Endothelial cell of umbilical vein (primary cell): ENCODE measurements at regions of chr4 and their contacts with region 1.

Region 1: DNA sequence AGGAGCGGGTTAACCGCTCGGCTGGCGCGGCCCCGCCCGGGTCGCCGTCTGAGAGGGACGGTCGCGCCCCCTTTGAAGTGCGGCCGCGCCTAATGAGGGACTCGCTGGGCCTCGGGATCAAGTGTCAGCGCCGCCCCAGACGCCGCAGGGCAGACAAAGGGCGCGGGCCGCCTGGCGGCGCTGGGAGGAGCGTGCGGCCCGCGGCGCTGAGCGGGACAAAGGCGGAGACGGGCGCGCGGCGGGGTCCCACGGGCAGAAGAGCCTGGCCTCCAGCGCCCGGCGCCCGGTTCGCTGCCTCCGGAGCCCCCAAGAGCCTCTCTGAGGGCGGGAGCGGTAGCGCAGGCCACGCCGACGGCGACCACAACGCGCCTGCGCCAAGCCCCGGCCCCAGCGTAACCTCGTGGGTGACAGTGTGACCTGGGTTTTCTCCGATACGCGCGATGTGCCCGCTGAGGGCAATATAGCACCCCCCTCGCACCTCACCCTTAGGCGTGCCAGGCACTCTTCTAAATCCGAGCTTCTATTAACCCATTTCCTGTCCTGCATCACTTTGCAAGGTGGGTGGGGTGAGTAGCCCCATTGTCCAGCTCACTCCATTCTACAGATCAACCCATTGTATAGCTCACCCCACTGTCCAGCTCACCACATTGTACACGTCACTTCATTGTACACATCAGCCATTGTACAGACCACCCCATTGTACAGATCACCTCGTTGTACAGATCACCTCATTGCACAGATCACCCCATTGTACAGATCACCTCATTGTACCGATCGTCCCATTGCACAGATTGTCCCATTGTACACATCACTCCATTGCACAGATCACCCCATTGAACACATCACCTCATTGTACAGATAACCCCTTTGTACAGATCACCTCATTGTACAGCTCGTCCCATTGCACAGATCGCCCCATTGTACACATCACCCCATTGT is 33.7 kb upstream of the STX18 start:
- DNase-seq: peak; percentile 64
- H3K4me3 ChIP-seq: peak overlapping the region; percentile 39 to 63 (median 50)
- H3K27ac ChIP-seq: peak overlapping the region; percentile 62
- H3K4me1 ChIP-seq: peaks cover 5% of the 10 kb centered on the region
- H3K27me3 ChIP-seq: no peaks in the 10 kb centered on the region
- CTCF ChIP-seq: peak in 1 of 2 donors; percentile 51
- POLR2A ChIP-seq: peak; percentile 58

Region 2: GRCh38 chr4:4541661-4542570 is 33.6 kb before region 1 on chr4 and contains the start of gene STX18:
- CTCF ChIA-PET with region 1: interaction called, 13 read pairs
- POLR2A ChIA-PET with region 1: no interaction called
- dilution Hi-C with region 1: no loop called
- intact Hi-C with region 1: loop called (anchors 1 kb)
- DNase-seq: peak; percentile 85
- H3K4me3 ChIP-seq: peak within 1 kb of the TSS; percentile 73 to 92 (median 88)
- H3K27ac ChIP-seq: peak within 1 kb of the TSS; percentile 71
- H3K4me1 ChIP-seq: peaks cover 18% of the 10 kb centered on the region
- H3K27me3 ChIP-seq: no peaks in the 10 kb centered on the region
- CTCF ChIP-seq: no peak
- POLR2A ChIP-seq: peak; percentile 60
- total RNA-seq, gene STX18: 29.9 and 31.2 TPM in 2 replicates

Region 3: GRCh38 chr4:4564522-4564921 is 11.0 kb before region 1 on chr4:
- CTCF ChIA-PET with region 1: interaction called, 15 read pairs
- POLR2A ChIA-PET with region 1: no interaction called
- dilution Hi-C with region 1: no loop called
- intact Hi-C with region 1: no loop called
- DNase-seq: no peak
- H3K4me3 ChIP-seq: no peak overlapping the region
- H3K27ac ChIP-seq: no peak overlapping the region
- H3K4me1 ChIP-seq: no peaks in the 10 kb centered on the region
- H3K27me3 ChIP-seq: no peaks in the 10 kb centered on the region
- CTCF ChIP-seq: no peak
- POLR2A ChIP-seq: no peak